PC-3 (cell line): ENCODE measurements at regions of chr12 and their contacts with region 1.

Region 1: DNA sequence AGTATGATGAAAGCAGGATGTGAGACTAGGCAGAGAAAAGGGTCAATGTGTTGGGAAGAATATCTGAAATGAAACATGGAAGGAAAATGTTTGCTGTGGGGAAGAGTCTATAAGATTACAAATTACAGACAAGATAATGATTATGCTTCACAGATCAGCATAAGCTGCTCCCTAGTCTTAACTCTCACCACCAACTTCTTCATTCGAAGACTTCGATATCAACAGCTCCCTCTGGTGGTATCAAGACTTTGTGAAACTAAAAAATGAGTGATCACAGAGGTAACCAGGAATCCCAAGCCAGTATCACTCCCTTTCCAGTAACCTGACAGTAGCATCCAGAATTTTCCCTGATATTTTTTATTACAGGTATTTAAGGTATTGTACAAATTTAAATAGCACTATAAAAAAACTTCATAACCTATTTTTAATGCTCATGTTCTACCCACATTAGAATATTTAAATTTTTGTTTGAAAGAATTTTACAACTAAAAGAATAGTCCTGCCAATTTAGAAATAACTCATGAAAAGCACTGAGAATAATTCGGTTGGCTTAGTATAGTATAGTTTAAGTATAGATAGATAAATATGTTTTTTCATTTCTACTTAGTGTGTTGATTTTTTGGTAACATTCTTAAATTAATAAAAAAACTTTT is 84.4 kb downstream of the C2CD5 start:
- DNase-seq: peak; percentile 75
- ATAC-seq: peak; percentile 55; the same call in 1 of the 2 replicates
- H3K4me3 ChIP-seq: no peak overlapping the region
- H3K27ac ChIP-seq: no peak overlapping the region
- H3K4me1 ChIP-seq: no peaks in the 10 kb centered on the region
- H3K27me3 ChIP-seq: no peaks in the 10 kb centered on the region
- CTCF ChIP-seq: peak; percentile 69

Region 2: DNA sequence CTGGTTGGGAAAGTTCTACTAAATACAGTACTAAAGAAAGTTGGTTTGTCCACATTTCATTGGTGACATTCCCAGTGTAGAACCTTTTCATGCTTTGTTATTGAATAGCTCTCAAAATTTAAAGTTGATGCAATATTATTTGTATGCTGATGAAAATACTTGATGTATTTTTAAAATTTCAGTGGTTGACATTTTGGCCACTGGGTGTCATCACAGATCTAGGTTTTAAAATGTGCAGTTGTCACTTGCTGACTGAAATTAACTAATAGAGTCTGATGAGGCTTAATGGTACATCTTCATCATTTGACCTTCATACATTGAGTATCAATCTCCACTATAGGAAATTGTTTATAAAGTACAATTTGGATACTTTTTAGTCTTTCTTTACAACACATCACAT is 376.8 kb before region 1 on chr12:
- CTCF ChIA-PET with region 1: no interaction called
- POLR2A ChIA-PET with region 1: no interaction called
- intact Hi-C with region 1: loop called (anchors 1 kb)
- DNase-seq: peak; percentile 46
- ATAC-seq: no peak
- H3K4me3 ChIP-seq: no peak overlapping the region
- H3K27ac ChIP-seq: no peak overlapping the region
- H3K4me1 ChIP-seq: peaks cover 12% of the 10 kb centered on the region; the same call in 1 of the 2 replicates
- H3K27me3 ChIP-seq: no peaks in the 10 kb centered on the region
- CTCF ChIP-seq: peak; percentile 62

Region 3: DNA sequence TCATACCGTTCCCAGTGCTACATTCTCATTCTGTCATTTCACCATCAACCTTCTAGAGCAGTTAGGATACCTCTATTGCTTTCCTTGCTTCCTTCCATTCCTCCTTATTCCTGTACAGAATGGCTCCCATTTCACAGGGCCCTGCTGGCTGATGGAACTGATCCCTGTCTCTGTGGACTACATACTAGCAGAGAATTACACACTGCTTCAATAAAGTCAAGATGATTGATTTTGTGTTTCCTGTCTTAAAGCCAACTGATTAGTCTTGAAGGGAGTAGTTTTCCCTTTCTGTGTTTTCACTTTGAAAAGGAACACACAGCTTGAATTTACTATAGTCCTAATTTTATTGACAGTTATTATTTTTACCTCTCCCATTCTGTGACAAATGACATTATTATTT is 255.6 kb before region 1 on chr12:
- CTCF ChIA-PET with region 1: no interaction called
- POLR2A ChIA-PET with region 1: no interaction called
- intact Hi-C with region 1: no loop called
- DNase-seq: no peak
- ATAC-seq: no peak
- H3K4me3 ChIP-seq: no peak overlapping the region
- H3K27ac ChIP-seq: no peak overlapping the region
- H3K4me1 ChIP-seq: no peaks in the 10 kb centered on the region
- H3K27me3 ChIP-seq: peaks cover 12% of the 10 kb centered on the region; the same call in 1 of the 2 replicates
- CTCF ChIP-seq: no peak

Region 4: GRCh38 chr12:22380031-22380430 is 79.9 kb before region 1 on chr12:
- CTCF ChIA-PET with region 1: no interaction called
- POLR2A ChIA-PET with region 1: no interaction called
- intact Hi-C with region 1: no loop called
- DNase-seq: no peak
- ATAC-seq: no peak
- H3K4me3 ChIP-seq: no peak overlapping the region
- H3K27ac ChIP-seq: no peak overlapping the region
- H3K4me1 ChIP-seq: no peaks in the 10 kb centered on the region
- H3K27me3 ChIP-seq: no peaks in the 10 kb centered on the region
- CTCF ChIP-seq: no peak

Region 5: GRCh38 chr12:22505826-22506225 is 45.9 kb after region 1 on chr12:
- CTCF ChIA-PET with region 1: no interaction called
- POLR2A ChIA-PET with region 1: interaction called, 12 read pairs
- intact Hi-C with region 1: no loop called
- DNase-seq: no peak
- ATAC-seq: no peak
- H3K4me3 ChIP-seq: no peak overlapping the region
- H3K27ac ChIP-seq: no peak overlapping the region
- H3K4me1 ChIP-seq: no peaks in the 10 kb centered on the region
- H3K27me3 ChIP-seq: no peaks in the 10 kb centered on the region
- CTCF ChIP-seq: no peak

Region 6: DNA sequence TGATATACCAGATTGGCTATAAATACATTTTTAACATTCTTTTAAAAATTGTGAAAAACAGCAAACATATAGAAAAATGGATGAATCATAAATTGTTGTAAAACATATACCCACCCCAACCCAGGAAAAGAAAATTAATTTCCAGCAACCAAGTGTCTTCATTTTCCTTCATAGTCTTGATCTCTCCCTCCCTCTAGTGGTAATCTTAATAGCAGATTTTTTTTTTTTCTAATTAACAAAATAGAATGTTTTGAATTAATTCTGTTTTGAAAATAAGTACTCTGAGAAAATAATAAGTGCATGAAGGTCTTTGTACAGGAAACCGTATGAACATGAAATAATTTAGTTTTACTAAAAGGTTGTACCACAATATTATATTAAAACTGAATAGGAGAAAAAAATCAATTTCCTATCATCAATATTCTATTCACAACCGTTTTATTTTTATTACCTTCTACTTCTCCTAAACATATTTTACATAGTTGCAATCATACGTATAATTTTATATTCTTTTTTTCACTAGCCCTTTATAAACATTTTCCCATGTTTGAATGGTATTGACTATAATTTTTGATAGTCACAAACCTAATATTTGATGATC is 172.0 kb after region 1 on chr12:
- CTCF ChIA-PET with region 1: no interaction called
- POLR2A ChIA-PET with region 1: no interaction called
- intact Hi-C with region 1: loop called (anchors 5 kb)
- DNase-seq: peak; percentile 31
- ATAC-seq: no peak
- H3K4me3 ChIP-seq: no peak overlapping the region
- H3K27ac ChIP-seq: no peak overlapping the region
- H3K4me1 ChIP-seq: peaks cover 15% of the 10 kb centered on the region
- H3K27me3 ChIP-seq: no peaks in the 10 kb centered on the region
- CTCF ChIP-seq: peak; percentile 66